ENCODE measurements at regions of chr6 and their contacts with region 1.

Region 1: GRCh38 chr6:150891888-150892485 is 26.5 kb downstream of the MTHFD1L start:
- DNase-seq: peak; percentile 64
- ATAC-seq: peak; percentile 84

Region 2: DNA sequence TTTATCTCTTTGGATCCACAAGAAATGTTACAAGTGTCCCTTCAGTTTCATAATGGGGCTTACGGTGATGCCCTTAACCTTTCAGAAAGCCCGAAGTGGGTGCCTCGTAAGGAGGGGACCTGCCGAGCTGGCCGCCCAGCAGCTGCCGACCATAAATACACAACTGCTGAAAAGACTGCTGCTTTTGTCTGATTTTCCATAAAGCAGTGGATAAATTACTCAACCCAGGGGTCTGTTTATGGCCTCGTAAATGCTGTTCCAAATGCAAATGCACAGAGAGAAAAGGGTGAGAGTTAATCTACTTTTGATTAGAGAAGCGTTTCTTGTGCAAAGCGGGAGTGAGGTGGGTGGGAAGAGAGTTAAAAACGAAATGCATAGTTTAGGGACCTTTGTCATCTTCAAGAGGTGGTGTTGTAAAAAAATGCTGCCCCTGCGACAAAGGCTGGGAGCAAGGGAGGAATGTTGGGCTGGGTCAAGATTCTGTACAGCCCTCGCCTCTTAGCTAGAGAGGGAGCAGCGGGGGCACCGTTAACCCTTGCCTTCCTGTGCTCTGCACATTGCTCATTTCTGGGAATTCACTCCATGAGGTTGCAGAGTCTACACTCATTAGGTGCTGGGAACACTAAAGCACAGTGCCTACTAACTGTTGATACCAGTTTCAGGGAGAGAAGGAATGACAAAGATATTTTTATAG is 138.5 kb before region 1 on chr6:
- intact Hi-C with region 1: no loop called
- DNase-seq: no peak
- ATAC-seq: peak; percentile 40

Region 3: DNA sequence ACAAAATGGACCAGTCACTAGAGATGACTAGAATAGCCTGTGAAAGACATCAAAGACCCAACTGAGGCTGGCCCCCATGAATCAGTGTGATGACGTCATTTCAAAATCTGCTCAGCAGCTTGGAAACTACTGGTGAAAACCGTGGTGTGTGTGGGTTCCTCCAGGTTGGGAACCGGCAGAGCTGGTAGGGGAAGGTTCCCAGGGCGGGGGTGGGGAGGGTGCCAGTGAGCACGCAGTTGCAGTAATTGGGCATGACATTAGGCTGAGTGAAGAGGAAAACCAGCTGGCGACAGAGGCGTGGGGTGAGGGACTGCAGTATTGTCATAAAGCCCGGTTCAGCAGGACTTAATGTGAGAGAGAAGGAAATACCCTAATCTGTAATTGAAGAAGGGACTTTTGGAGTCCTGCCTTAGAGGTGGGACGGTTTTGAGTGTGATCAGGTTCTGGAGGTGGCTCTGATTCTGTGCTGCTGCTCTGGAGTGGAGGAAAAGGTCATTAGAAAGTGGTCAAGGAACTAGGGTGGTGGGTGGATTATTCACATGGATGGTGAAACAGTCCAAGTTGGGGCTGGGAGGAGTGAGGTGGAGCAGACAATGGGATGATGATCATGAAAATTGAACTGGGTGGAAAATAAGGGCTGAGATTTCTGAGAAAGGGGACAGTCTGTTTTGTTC is 78.5 kb before region 1 on chr6:
- intact Hi-C with region 1: no loop called
- DNase-seq: no peak
- ATAC-seq: peak; percentile 33

Region 4: GRCh38 chr6:150865406-150866146 is 26.4 kb before region 1 on chr6 and contains the start of gene MTHFD1L:
- intact Hi-C with region 1: no loop called
- DNase-seq: peak; percentile 83
- ATAC-seq: peak; percentile 70
- total RNA-seq, gene MTHFD1L: 2.4 TPM

Region 5: GRCh38 chr6:151335930-151336329 is 443.9 kb after region 1 on chr6:
- intact Hi-C with region 1: loop called (anchors 2 kb)
- DNase-seq: no peak
- ATAC-seq: no peak